GM10248 (cell line): ENCODE measurements at regions of chr2 and their contacts with region 1.

Region 1: GRCh38 chr2:137525641-137526190 is 438.6 kb upstream of the HNMT start:
- DNase-seq: no peak
- CTCF ChIP-seq: no peak

Region 2: GRCh38 chr2:137535897-137536296 is 10.2 kb after region 1 on chr2:
- CTCF ChIA-PET with region 1: interaction called, 12 read pairs
- POLR2A ChIA-PET with region 1: no interaction called
- DNase-seq: no peak
- CTCF ChIP-seq: no peak